ENCODE measurements at regions of chr18 and their contacts with region 1.

Region 1: GRCh38 chr18:11851146-11851805 is at the start of gene CHMP1B:
- DNase-seq: peak; percentile 91
- ATAC-seq: peak; percentile 91
- H3K4me3 ChIP-seq: peak within 1 kb of the TSS; percentile 68 to 93 (median 83)
- H3K27ac ChIP-seq: peak within 1 kb of the TSS; percentile 80
- H3K4me1 ChIP-seq: peaks cover 49% of the 10 kb centered on the region
- H3K27me3 ChIP-seq: no peaks in the 10 kb centered on the region; a peak in 2 of 5 replicates
- CTCF ChIP-seq: no peak
- EP300 ChIP-seq: peak in 1 of 2 experiments; percentile 39; a peak in 2 of 4 replicates
- POLR2A ChIP-seq: peak; percentile 93 to 96
- RAD21 ChIP-seq: no peak
- total RNA-seq, gene CHMP1B: 18.8 and 24.0 TPM in 2 replicates

Region 2: DNA sequence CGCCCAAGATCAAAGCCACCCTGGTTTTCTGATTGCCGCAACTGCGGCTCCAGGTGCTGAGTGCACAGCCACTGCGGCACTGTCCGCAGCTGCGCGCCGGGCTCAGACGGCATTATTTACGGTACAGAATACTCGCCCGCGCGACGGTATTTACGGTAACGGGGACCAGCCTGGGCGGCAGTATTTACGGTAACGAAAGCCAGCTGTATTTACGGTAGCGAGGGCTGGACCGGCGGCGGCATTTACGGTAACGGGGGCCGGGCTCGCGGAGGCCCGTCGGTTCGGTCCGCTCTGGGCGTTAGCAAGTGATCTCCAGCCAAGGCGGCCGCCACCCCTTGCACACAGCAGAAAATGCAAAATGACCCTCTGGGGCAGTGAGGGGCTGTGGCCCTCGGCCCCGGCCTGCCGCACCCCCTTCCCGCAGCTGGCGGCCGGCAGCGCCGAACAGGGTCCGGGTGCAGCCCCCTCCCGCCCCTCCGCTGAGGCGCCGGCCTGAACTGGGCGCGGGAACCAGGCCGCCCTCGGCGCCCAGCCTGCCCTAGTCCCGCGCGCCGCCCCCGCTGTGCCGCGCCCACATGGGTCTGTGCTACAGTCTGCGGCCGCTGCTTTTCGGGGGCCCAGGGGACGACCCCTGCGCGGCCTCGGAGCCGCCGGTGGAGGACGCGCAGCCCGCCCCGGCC is 162.1 kb before region 1 on chr18 and contains the start of gene GNAL:
- CTCF ChIA-PET with region 1: no interaction called
- POLR2A ChIA-PET with region 1: no interaction called
- in situ Hi-C with region 1: no loop called
- intact Hi-C with region 1: no loop called
- DNase-seq: peak; percentile 55
- ATAC-seq: peak; percentile 92
- H3K4me3 ChIP-seq: peak within 1 kb of the TSS; percentile 35 to 69 (median 47); a peak in 5 of 6 replicates
- H3K27ac ChIP-seq: no peak within 1 kb of the TSS
- H3K4me1 ChIP-seq: no peaks in the 10 kb centered on the region
- H3K27me3 ChIP-seq: peaks cover 4 to 25% of the 10 kb centered on the region in 2 experiments
- CTCF ChIP-seq: no peak
- EP300 ChIP-seq: no peak
- POLR2A ChIP-seq: no peak
- RAD21 ChIP-seq: no peak
- total RNA-seq, gene GNAL: 1.3 and 1.4 TPM in 2 replicates

Region 3: GRCh38 chr18:11840493-11840892 is 10.8 kb before region 1 on chr18:
- CTCF ChIA-PET with region 1: no interaction called
- POLR2A ChIA-PET with region 1: interaction called, 16 read pairs
- in situ Hi-C with region 1: no loop called
- intact Hi-C with region 1: loop called (anchors 1 kb)
- DNase-seq: peak; percentile 96
- ATAC-seq: peak; percentile 100
- H3K4me3 ChIP-seq: peak overlapping the region in 1 of 3 experiments; percentile 15; a peak in 2 of 6 replicates
- H3K27ac ChIP-seq: peak overlapping the region; percentile 51
- H3K4me1 ChIP-seq: peaks cover 22% of the 10 kb centered on the region
- H3K27me3 ChIP-seq: no peaks in the 10 kb centered on the region
- CTCF ChIP-seq: peak; percentile 13; the same call in 1 of the 2 replicates
- EP300 ChIP-seq: peak in 1 of 2 experiments; percentile 71; a peak in 2 of 4 replicates
- POLR2A ChIP-seq: peak in 1 of 2 experiments; percentile 55; a peak in 2 of 4 replicates
- RAD21 ChIP-seq: no peak

Region 4: GRCh38 chr18:11908182-11909060 is 57.1 kb after region 1 on chr18 and contains the start of gene MPPE1:
- CTCF ChIA-PET with region 1: no interaction called
- POLR2A ChIA-PET with region 1: no interaction called
- in situ Hi-C with region 1: no loop called
- intact Hi-C with region 1: loop called (anchors 10 kb)
- DNase-seq: peak; percentile 73
- ATAC-seq: peak; percentile 95
- H3K4me3 ChIP-seq: peak within 1 kb of the TSS; percentile 68 to 86 (median 82)
- H3K27ac ChIP-seq: peak within 1 kb of the TSS; percentile 96
- H3K4me1 ChIP-seq: peaks cover 30% of the 10 kb centered on the region
- H3K27me3 ChIP-seq: no peaks in the 10 kb centered on the region; a peak in 1 of 5 replicates
- CTCF ChIP-seq: peak; percentile 26; the same call in 1 of the 2 replicates
- EP300 ChIP-seq: no peak
- POLR2A ChIP-seq: peak; percentile 74 to 78
- RAD21 ChIP-seq: no peak
- total RNA-seq, gene MPPE1: 5.4 and 11.9 TPM in 2 replicates

Measured in HepG2 (cell line).